ENCODE measurements at regions of chr19 and their contacts with region 1.

Region 1: DNA sequence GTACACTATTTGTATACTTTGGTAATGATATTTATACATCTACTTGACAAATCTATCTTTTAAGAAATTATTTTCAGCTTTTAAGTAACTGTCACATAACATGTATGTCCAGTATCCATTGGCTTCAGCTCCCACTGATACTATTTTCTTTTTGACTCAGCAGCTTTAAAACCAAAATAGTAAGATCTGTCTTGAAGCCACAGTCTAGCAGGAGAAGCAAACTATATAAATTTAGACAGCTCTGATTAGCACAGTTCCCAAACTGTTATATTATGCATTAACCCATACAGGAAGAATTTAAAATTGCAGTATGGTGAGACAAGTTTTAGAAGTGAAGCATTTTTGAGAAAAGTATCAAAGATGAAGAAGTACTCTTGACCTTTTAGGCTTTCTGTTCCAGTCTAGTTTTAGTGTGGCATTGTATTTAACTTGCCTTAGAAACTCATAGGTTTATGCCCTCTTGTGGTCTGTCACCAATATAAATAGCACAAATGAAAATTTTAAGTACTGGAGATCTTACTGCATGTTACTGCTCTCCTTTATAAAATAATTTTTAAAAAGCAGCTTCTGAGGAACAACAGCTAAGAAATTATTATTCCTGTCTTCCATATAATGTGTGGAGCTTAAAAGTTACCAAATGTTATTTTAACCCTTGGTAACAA is 24.7 kb downstream of the URI1 start:
- DNase-seq: no peak
- ATAC-seq: no peak
- H3K4me3 Mint-ChIP-seq: no peak overlapping the region
- H3K27ac Mint-ChIP-seq: no peak overlapping the region
- H3K4me1 Mint-ChIP-seq: peaks cover 48% of the 10 kb centered on the region
- H3K27me3 Mint-ChIP-seq: no peaks in the 10 kb centered on the region

Region 2: GRCh38 chr19:29943615-29944014 is 23.1 kb before region 1 on chr19:
- CTCF ChIA-PET with region 1: interaction called, 20 read pairs
- POLR2A ChIA-PET with region 1: interaction called, 6 read pairs
- DNase-seq: no peak
- ATAC-seq: no peak
- H3K4me3 Mint-ChIP-seq: peak overlapping the region; percentile 98
- H3K27ac Mint-ChIP-seq: peak overlapping the region; percentile 94
- H3K4me1 Mint-ChIP-seq: peaks cover 48% of the 10 kb centered on the region
- H3K27me3 Mint-ChIP-seq: no peaks in the 10 kb centered on the region

Region 3: GRCh38 chr19:29978080-29978479 is 11.4 kb after region 1 on chr19:
- CTCF ChIA-PET with region 1: interaction called, 10 read pairs
- POLR2A ChIA-PET with region 1: no interaction called
- DNase-seq: no peak
- ATAC-seq: no peak
- H3K4me3 Mint-ChIP-seq: no peak overlapping the region
- H3K27ac Mint-ChIP-seq: no peak overlapping the region
- H3K4me1 Mint-ChIP-seq: peaks cover 23% of the 10 kb centered on the region
- H3K27me3 Mint-ChIP-seq: no peaks in the 10 kb centered on the region

Region 4: DNA sequence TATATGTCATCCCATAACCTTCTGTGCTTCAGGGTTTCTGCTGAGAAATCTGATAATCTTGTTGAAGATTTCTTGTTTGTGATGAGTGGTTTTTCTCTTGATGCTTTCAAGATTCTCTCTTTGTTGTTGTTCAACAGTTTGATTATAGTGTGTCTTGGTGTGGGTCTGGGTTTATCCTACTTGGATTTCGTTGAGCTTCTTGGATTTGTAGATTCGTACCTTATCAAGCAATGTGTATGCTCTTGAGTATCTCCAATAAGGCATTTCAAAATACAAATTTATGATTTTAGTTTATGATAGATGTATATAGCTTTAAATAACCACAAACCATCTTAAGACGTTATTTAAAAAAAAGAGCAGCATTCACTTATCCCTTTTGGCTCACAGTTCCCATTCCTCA is 32.8 kb after region 1 on chr19:
- CTCF ChIA-PET with region 1: no interaction called
- POLR2A ChIA-PET with region 1: no interaction called
- DNase-seq: no peak
- ATAC-seq: no peak
- H3K4me3 Mint-ChIP-seq: no peak overlapping the region
- H3K27ac Mint-ChIP-seq: no peak overlapping the region
- H3K4me1 Mint-ChIP-seq: peaks cover 25% of the 10 kb centered on the region
- H3K27me3 Mint-ChIP-seq: no peaks in the 10 kb centered on the region